ENCODE measurements at regions of chr11 and their contacts with region 1.

Region 1: DNA sequence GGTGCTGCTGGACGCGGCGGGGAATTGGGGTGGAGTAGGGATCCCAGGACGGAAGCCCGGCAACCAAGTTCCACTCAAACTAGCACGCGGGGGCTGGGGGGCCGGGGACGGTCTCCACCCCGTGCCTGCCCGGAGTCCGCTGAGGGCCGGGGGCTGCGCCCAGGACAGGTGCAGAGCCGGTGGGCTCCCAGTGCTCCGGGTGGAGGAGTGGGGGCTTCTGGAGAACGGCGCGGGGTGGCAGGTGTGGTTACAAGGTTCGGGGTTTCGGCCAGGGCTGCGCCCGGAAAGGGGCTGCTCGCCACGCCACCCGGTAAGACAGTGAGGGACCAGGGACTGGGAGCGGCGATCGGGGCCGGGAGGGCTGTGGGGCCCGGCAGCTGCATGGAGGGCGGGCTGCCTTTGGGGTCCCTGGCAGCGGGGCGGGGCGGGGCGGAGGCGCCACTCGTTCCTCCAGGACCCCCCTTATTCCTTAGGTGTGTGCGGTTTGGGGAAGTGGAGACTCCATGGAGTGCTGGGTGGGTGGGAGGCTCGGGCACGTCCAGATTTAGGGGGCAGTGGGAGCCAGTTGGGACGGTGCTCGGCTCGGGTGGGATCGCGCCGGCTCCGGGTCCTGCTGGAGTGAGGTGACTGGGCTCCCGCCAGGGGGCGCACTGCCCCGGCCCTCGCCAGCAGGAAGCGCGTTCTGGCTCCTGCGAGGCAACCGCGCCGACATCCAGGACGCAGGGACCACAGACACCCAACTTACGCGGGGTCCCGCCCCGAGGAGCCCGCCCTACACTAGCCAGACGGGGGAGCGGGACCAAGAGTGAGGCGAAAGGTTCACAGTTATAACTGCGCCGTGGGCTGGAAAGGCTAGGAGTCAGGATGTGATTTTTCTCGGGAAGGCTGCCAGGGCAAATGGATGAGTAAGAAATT is 868 bp downstream of the TSPAN18 start:
- DNase-seq: peak; percentile 75 to 94 (median 83)
- ATAC-seq: peak; percentile 93
- H3K4me3 ChIP-seq: peak overlapping the region; percentile 47 to 50
- H3K27ac ChIP-seq: peak overlapping the region; percentile 13 to 78
- H3K4me1 ChIP-seq: peaks cover 0 to 25% of the 10 kb centered on the region in 2 donors
- H3K27me3 ChIP-seq: peaks cover 6 to 54% of the 10 kb centered on the region in 2 donors
- CTCF ChIP-seq: peak; percentile 91 to 97

Region 2: GRCh38 chr11:44893846-44894617 is 166.4 kb after region 1 on chr11:
- intact Hi-C with region 1: loop called in 1 of 2 experiments (anchors 10 kb)
- DNase-seq: peak in 3 of 4 donors; percentile 40 to 81 (median 79)
- ATAC-seq: peak; percentile 91
- H3K4me3 ChIP-seq: no peak overlapping the region
- H3K27ac ChIP-seq: no peak overlapping the region
- H3K4me1 ChIP-seq: no peaks in the 10 kb centered on the region
- H3K27me3 ChIP-seq: peaks cover 0 to 10% of the 10 kb centered on the region in 2 donors
- CTCF ChIP-seq: peak; percentile 65 to 73

Measured in left lung (tissue), 14 donors.